ENCODE measurements at regions of chr11 and their contacts with region 1.

Region 1: GRCh38 chr11:110429731-110430266 is at the start of gene FDX1:
- DNase-seq: peak; percentile 51
- ATAC-seq: peak; percentile 85
- H3K4me3 ChIP-seq: peak within 1 kb of the TSS; percentile 72 to 89
- H3K27ac ChIP-seq: peak within 1 kb of the TSS; percentile 84
- H3K4me1 ChIP-seq: peaks cover 35 to 50% of the 10 kb centered on the region in 2 experiments
- H3K27me3 ChIP-seq: no peaks in the 10 kb centered on the region
- CTCF ChIP-seq: peak; percentile 4 to 40 (median 32); a peak in 4 of 6 replicates
- POLR2A ChIP-seq: peak; percentile 55
- RAD21 ChIP-seq: no peak
- total RNA-seq, gene FDX1: 14.5 TPM

Region 2: DNA sequence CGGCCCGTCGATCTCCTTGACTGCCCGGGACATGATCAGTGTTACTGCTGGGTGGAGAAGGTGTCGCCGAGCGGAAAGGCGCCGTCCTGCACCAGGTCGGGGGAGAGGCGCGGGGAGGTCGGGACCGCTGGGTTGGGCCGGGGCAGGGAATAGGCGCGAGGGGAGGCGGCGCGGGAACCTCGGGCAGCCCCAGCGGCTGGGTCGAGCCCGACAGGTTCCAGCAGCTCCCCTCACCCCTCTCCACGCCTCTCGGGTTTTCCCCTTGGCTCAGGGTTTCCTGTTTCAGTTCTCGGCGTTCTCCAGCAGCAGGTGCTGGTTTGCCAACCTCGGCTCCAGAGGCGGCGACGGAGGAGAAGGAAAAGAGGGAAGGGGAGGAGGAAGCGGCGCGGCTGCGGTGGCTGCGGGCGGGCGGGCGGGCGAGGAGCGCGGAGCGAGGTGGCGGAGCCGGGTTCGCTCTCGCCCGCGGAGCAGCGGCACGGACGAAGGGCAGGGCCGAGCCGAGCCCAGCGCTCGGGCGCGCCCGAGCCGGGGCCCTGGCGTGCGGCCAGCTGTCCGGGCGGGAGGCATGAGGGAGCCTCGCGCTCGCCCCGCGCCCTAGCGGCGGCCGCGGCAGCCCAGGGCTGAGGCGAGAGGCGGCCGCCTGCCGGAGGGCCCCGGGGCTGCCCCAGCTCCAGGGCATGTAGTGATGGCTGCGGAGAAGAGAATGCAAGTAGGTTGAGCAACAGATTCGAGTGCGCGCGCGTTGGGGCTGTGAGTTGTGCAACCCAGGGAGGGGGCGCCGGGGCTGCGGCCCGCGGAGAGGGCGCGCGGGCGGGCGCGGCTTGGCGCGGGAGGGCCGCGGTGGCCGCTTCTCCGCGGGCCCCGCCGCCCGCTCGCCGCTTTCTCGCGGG is 337.0 kb before region 1 on chr11 and contains the start of gene ZC3H12C:
- CTCF ChIA-PET with region 1: no interaction called
- POLR2A ChIA-PET with region 1: no interaction called
- RAD21 ChIA-PET with region 1: no interaction called
- intact Hi-C with region 1: loop called (anchors 5 kb)
- DNase-seq: peak; percentile 77
- ATAC-seq: peak; percentile 79
- H3K4me3 ChIP-seq: peak within 1 kb of the TSS; percentile 69 to 74
- H3K27ac ChIP-seq: peak within 1 kb of the TSS; percentile 89
- H3K4me1 ChIP-seq: peaks cover 22 to 36% of the 10 kb centered on the region in 2 experiments
- H3K27me3 ChIP-seq: no peaks in the 10 kb centered on the region
- CTCF ChIP-seq: peak in 1 of 3 experiments; percentile 41; a peak in 1 of 6 replicates
- POLR2A ChIP-seq: no peak
- RAD21 ChIP-seq: peak; percentile 22; the same call in 1 of the 2 replicates
- total RNA-seq, gene ZC3H12C: 10.2 TPM

Region 3: DNA sequence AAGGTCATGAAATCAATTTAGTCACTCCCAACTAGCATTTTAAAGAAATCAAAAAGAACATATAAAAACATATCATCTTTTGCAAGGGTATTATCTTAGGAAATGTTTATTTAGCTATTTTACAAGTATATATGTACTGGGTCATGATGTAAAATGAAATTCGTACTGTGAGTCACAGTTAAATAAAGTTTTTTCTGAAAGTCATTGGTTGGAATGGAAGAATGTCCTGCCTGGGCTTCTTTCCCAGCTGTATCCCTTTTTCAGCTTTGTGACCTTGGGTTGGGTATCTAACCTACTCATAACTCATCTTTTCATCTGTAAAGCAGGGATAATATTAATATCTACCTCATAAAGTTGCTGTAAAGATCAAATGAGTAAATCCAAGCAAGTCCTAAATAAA is 15.6 kb after region 1 on chr11:
- CTCF ChIA-PET with region 1: interaction called, 14 read pairs
- POLR2A ChIA-PET with region 1: no interaction called
- RAD21 ChIA-PET with region 1: no interaction called
- intact Hi-C with region 1: no loop called
- DNase-seq: no peak
- ATAC-seq: no peak
- H3K4me3 ChIP-seq: no peak overlapping the region
- H3K27ac ChIP-seq: no peak overlapping the region
- H3K4me1 ChIP-seq: no peaks in the 10 kb centered on the region
- H3K27me3 ChIP-seq: no peaks in the 10 kb centered on the region
- CTCF ChIP-seq: no peak
- POLR2A ChIP-seq: no peak
- RAD21 ChIP-seq: no peak

Region 4: DNA sequence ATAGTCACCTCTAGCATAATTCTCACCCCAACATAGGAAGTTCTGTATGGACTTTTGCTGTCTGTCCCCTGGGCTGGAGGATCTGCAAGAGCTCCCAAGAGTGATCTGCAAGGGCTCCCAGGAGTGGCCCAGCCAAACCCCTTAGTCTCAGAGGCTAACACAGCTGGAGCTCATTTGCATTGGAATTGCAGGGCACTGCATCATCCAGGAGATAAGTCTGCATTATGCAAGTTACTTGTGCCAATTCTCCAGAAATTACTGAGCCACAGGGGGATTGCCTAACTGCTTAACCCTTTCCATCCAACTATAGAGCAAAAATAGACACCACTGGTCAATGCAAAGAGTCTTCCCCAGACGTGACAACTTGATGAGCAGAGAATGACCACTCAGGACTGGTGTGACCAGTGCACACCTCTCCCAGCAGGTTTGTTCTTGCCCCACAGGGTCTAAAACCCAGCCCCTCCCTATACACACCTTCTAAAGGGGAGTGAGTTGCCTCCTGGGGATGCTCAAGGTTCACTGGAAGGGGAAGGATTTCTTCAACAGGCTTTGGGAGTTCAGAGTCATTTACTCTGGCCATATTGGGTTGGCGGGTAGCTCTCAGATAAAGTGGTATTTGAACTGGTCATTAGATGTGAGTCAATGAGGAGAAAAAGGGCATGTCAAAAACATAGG is 906.9 kb after region 1 on chr11:
- CTCF ChIA-PET with region 1: no interaction called
- POLR2A ChIA-PET with region 1: no interaction called
- RAD21 ChIA-PET with region 1: no interaction called
- intact Hi-C with region 1: no loop called
- DNase-seq: no peak
- ATAC-seq: no peak
- H3K4me3 ChIP-seq: no peak overlapping the region
- H3K27ac ChIP-seq: no peak overlapping the region
- H3K4me1 ChIP-seq: no peaks in the 10 kb centered on the region
- H3K27me3 ChIP-seq: peaks cover 6% of the 10 kb centered on the region; the same call in 1 of the 2 replicates
- CTCF ChIP-seq: no peak
- POLR2A ChIP-seq: no peak
- RAD21 ChIP-seq: no peak

Measured in HCT116 (cell line).